ENCODE measurements at regions of chr19 and their contacts with region 1.

Region 1: GRCh38 chr19:2950286-2951124 is 5.7 kb upstream of the ZNF77 start:
- DNase-seq: peak; percentile 94
- H3K4me3 ChIP-seq: peak overlapping the region; percentile 73 to 90
- H3K27ac ChIP-seq: peak overlapping the region; percentile 79 to 96
- H3K4me1 ChIP-seq: peaks cover 4 to 9% of the 10 kb centered on the region in 2 experiments; a peak in 2 of 4 replicates
- H3K27me3 ChIP-seq: no peaks in the 10 kb centered on the region
- CTCF ChIP-seq: no peak
- EP300 ChIP-seq: no peak
- RAD21 ChIP-seq: no peak

Region 2: GRCh38 chr19:2962045-2962561 is 11.6 kb after region 1 on chr19:
- CTCF ChIA-PET with region 1: interaction called, 29 read pairs
- POLR2A ChIA-PET with region 1: interaction called, 3 read pairs
- DNase-seq: peak; percentile 77
- H3K4me3 ChIP-seq: peak overlapping the region in 1 of 2 experiments; percentile 37; a peak in 1 of 4 replicates
- H3K27ac ChIP-seq: no peak overlapping the region
- H3K4me1 ChIP-seq: no peaks in the 10 kb centered on the region
- H3K27me3 ChIP-seq: 0 out of 2 replicates have a peak, but pooled peaks cover 3% of the 10 kb centered on the region
- CTCF ChIP-seq: peak; percentile 83
- EP300 ChIP-seq: no peak; a peak in 1 of 4 replicates
- RAD21 ChIP-seq: peak; percentile 94

Region 3: GRCh38 chr19:3075895-3076431 is 125.5 kb after region 1 on chr19:
- CTCF ChIA-PET with region 1: interaction called, 34 read pairs
- POLR2A ChIA-PET with region 1: no interaction called
- DNase-seq: peak; percentile 89
- H3K4me3 ChIP-seq: peak overlapping the region; percentile 24 to 57; a peak in 3 of 4 replicates
- H3K27ac ChIP-seq: no peak overlapping the region
- H3K4me1 ChIP-seq: peaks cover 0 to 3% of the 10 kb centered on the region in 2 experiments; a peak in 1 of 4 replicates
- H3K27me3 ChIP-seq: no peaks in the 10 kb centered on the region
- CTCF ChIP-seq: peak; percentile 93
- EP300 ChIP-seq: no peak
- RAD21 ChIP-seq: peak; percentile 77

Region 4: GRCh38 chr19:3108775-3109174 is 158.3 kb after region 1 on chr19:
- CTCF ChIA-PET with region 1: interaction called, 27 read pairs
- POLR2A ChIA-PET with region 1: interaction called, 3 read pairs
- DNase-seq: peak; percentile 84
- H3K4me3 ChIP-seq: no peak overlapping the region
- H3K27ac ChIP-seq: no peak overlapping the region
- H3K4me1 ChIP-seq: no peaks in the 10 kb centered on the region
- H3K27me3 ChIP-seq: no peaks in the 10 kb centered on the region
- CTCF ChIP-seq: peak; percentile 85
- EP300 ChIP-seq: no peak
- RAD21 ChIP-seq: peak; percentile 63

Region 5: DNA sequence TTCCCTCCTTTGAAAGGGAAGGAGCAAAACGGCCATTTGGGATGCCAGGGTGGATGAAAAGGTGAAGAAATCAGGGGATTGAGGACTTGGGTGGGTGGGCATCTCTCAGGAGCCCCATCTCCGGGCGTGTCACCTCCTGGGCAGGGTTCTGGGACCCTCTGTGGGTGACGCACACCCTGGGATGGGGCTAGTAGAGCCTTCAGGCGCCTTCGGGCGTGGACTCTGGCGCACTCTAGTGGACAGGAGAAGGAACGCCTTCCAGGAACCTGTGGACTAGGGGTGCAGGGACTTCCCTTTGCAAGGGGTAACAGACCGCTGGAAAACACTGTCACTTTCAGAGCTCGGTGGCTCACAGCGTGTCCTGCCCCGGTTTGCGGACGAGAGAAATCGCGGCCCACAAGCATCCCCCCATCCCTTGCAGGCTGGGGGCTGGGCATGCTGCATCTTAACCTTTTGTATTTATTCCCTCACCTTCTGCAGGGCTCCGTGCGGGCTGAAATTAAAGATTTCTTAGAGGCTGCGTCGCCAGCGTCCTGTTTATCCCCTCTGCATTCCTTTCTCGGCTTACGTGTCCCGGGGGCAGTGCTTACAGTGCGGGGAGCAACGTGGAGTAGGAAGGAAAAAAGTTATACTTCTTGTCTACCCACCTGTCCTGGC is 212.9 kb after region 1 on chr19:
- CTCF ChIA-PET with region 1: interaction called, 13 read pairs
- POLR2A ChIA-PET with region 1: no interaction called
- DNase-seq: peak; percentile 93
- H3K4me3 ChIP-seq: peak overlapping the region in 1 of 2 experiments; percentile 19; a peak in 2 of 4 replicates
- H3K27ac ChIP-seq: no peak overlapping the region
- H3K4me1 ChIP-seq: no peaks in the 10 kb centered on the region; a peak in 1 of 4 replicates
- H3K27me3 ChIP-seq: no peaks in the 10 kb centered on the region
- CTCF ChIP-seq: peak; percentile 92
- EP300 ChIP-seq: no peak
- RAD21 ChIP-seq: peak; percentile 91